Left ventricle myocardium inferior (tissue), 1 donor: ENCODE measurements at regions of chr9 and their contacts with region 1.

Region 1: DNA sequence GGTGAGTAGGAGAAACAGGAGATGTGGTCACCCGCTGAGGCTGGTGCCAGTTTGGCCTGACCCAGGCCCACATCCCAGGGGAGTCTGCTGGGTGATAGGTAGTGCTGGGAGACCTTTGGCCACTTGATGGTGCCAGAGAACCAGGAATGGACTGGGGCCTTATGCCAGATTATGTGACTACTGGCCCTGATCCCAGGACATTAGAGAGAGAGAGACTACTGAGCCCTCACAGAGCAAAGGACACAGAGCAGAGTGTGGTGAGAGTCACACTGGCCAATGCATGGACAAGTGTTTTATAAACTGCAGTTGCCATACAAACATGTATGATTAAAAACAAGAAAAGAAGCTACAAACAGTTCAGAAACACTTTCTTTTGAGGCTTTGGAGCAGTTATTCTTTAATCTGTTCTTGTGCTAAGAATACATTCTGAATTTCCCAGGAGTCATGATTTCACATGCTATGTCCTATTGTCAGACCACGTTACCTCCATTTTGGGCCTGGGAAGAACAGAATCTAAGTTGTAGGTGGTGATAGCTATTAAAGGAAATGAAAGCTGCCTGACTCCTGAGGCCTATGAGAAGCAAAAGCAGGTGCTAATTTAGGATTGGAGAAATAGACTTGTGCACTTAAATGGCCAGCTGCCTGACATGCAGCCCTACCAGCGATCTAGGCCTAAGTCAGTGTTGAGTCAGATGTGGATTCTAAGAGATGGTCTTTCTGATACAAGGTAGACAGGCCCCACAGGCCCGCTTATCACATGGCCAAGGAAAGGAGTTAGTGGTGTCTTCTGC is 32.6 kb upstream of the TMOD1 start:
- DNase-seq: peak; percentile 64
- H3K4me3 ChIP-seq: no peak overlapping the region
- H3K27ac ChIP-seq: peak overlapping the region; percentile 86
- H3K4me1 ChIP-seq: peaks cover 21% of the 10 kb centered on the region
- H3K27me3 ChIP-seq: no peaks in the 10 kb centered on the region
- CTCF ChIP-seq: peak; percentile 89

Region 2: DNA sequence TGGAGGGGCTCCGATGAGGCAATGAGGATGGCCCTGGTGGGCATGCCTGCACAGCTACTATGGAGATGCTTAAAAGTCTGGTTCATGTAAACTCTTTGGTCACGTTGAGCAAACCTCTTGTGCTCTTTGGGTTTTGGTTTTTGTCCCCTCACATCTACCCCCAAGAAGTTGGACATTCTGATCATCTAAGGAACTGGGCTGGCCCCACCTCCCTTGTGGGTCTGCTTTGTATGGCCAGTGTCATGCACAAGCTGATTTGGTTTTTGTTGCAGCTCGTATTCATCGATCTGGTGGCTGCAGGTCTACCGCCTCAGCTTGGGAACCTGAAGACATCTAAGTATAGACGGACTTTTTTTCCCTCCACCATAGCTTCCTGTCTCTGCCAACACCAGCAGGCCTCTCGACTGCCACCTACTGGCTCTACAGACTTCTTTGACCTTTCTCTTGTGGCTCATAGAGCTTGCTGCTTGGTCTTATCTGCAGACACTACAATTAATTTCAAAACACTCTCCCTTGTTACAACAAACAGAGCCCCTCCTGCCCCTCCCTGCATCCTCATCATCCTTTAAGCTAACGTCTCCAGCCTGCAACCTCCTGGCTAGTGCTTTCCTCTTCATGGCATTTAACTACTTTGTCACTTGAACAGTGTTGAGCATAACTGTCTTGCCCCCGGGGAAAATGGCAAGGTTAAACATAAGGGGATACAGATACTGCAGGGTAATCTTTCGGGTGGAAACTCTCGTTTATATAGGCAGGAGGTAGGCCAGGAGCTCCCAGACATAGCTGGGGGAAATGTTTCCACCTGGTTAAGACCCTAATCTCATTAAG is 129.8 kb after region 1 on chr9:
- intact Hi-C with region 1: loop called (anchors 2 kb)
- DNase-seq: peak; percentile 63
- H3K4me3 ChIP-seq: no peak overlapping the region
- H3K27ac ChIP-seq: peak overlapping the region; percentile 87
- H3K4me1 ChIP-seq: peaks cover 82% of the 10 kb centered on the region
- H3K27me3 ChIP-seq: no peaks in the 10 kb centered on the region
- CTCF ChIP-seq: peak; percentile 92

Region 3: GRCh38 chr9:97615439-97616072 is 146.7 kb after region 1 on chr9:
- intact Hi-C with region 1: loop called (anchors 5 kb)
- DNase-seq: no peak
- H3K4me3 ChIP-seq: no peak overlapping the region
- H3K27ac ChIP-seq: peak overlapping the region; percentile 15
- H3K4me1 ChIP-seq: peaks cover 16% of the 10 kb centered on the region
- H3K27me3 ChIP-seq: no peaks in the 10 kb centered on the region
- CTCF ChIP-seq: peak; percentile 86